ENCODE measurements at regions of chr14 and their contacts with region 1.

Region 1: DNA sequence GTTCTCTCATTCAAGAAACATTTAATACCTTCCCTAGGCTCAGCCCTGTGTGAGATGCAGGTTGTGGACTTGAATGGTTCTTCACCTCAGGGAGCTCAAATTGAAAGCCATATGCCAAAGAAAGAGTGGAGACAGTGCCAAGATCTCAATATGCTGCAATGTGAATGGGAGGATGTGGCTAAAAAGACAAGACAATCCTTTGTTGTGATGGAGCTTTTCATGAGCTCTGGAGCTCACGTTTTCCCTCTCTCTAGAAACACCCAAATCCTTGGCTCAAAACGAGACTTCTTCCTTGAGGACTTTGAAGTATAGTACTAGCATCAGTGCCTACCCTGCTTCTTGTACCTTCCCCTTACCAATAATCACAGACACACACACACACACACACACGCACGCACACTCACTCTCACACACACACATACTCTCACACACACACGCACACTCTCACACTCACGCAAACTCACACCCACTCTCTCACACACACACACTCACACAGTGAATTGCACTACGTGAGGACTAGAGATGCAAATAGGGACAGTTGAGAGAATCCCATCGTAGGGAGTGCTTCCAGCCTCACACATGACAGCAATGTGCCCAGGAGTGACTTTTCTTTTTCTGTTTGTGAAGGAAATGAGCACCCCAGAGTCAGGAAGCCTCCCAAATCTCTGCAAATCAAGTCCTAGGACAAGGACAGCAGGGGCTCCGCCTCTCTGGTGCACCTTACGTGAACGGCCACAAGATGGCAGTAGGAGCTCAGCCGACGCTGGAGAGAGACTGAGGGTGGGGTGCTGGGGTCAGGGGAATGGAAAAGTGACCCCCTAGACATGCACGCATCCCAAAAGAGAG is 231.4 kb downstream of the PCNX1 start:
- DNase-seq: peak in 1 of 2 donors; percentile 34
- H3K4me3 ChIP-seq: no peak overlapping the region
- H3K27ac ChIP-seq: no peak overlapping the region
- H3K4me1 ChIP-seq: peaks cover 0 to 9% (median 4%) of the 10 kb centered on the region in 4 donors
- H3K27me3 ChIP-seq: no peaks in the 10 kb centered on the region
- CTCF ChIP-seq: peak; percentile 90

Region 2: DNA sequence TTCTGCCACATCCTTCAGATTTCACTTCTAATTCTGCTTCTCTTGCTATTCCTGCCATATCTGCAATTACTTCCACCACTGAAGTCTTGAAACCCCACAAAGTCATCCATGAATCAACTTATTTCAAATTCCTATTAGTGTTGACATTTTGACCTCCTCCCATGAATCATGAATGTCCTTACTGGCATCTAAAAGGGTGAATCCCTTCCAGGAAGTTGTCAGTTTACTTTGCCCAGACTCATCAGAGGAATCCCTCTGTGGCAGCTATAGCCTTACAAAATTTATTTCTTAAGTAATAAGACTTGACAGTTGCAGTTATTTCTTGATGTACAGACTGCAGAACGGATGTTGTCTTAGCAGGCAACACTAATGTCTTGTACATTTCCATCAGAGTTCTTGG is 68.5 kb before region 1 on chr14:
- intact Hi-C with region 1: no loop called
- DNase-seq: no peak
- H3K4me3 ChIP-seq: no peak overlapping the region
- H3K27ac ChIP-seq: no peak overlapping the region
- H3K4me1 ChIP-seq: no peaks in the 10 kb centered on the region
- H3K27me3 ChIP-seq: no peaks in the 10 kb centered on the region
- CTCF ChIP-seq: no peak

Region 3: GRCh38 chr14:71320107-71320733 is 181.5 kb after region 1 on chr14:
- intact Hi-C with region 1: loop called (anchors 10 kb)
- DNase-seq: peak; percentile 96 to 99
- H3K4me3 ChIP-seq: peak within 1 kb of the TSS; percentile 91 to 98
- H3K27ac ChIP-seq: peak within 1 kb of the TSS; percentile 99 to 100
- H3K4me1 ChIP-seq: peaks cover 0 to 23% (median 12%) of the 10 kb centered on the region in 4 donors
- H3K27me3 ChIP-seq: no peaks in the 10 kb centered on the region
- CTCF ChIP-seq: peak; percentile 4 to 20

Region 4: GRCh38 chr14:71753126-71753830 is 614.6 kb after region 1 on chr14:
- intact Hi-C with region 1: loop called (anchors 2 kb)
- DNase-seq: peak; percentile 91 to 93
- H3K4me3 ChIP-seq: peak overlapping the region in 1 of 2 donors; percentile 29
- H3K27ac ChIP-seq: peak overlapping the region; percentile 31 to 41
- H3K4me1 ChIP-seq: peaks cover 0 to 11% (median 6%) of the 10 kb centered on the region in 4 donors
- H3K27me3 ChIP-seq: no peaks in the 10 kb centered on the region
- CTCF ChIP-seq: peak; percentile 89 to 96

Region 5: GRCh38 chr14:71852181-71852580 is 713.5 kb after region 1 on chr14:
- intact Hi-C with region 1: loop called (anchors 5 kb)
- DNase-seq: no peak
- H3K4me3 ChIP-seq: no peak overlapping the region
- H3K27ac ChIP-seq: no peak overlapping the region
- H3K4me1 ChIP-seq: peaks cover 0 to 8% (median 3%) of the 10 kb centered on the region in 4 donors
- H3K27me3 ChIP-seq: no peaks in the 10 kb centered on the region
- CTCF ChIP-seq: no peak

Region 6: GRCh38 chr14:72291908-72292688 is 1153.4 kb after region 1 on chr14:
- intact Hi-C with region 1: loop called (anchors 10 kb)
- DNase-seq: no peak
- H3K4me3 ChIP-seq: peak overlapping the region in 1 of 2 donors; percentile 14
- H3K27ac ChIP-seq: no peak overlapping the region
- H3K4me1 ChIP-seq: no peaks in the 10 kb centered on the region
- H3K27me3 ChIP-seq: no peaks in the 10 kb centered on the region
- CTCF ChIP-seq: peak; percentile 80 to 83